GM12878 (cell line): ENCODE measurements at regions of chr20 and their contacts with region 1.

Region 1: GRCh38 chr20:36154700-36155628 is at the start of gene EPB41L1:
- DNase-seq: no peak
- ATAC-seq: no peak
- H3K4me3 ChIP-seq: no peak within 1 kb of the TSS
- H3K27ac ChIP-seq: no peak within 1 kb of the TSS
- H3K4me1 ChIP-seq: no peaks in the 10 kb centered on the region
- H3K27me3 ChIP-seq: peaks cover 7 to 10% of the 10 kb centered on the region in 2 experiments; a peak in 3 of 4 replicates
- CTCF ChIP-seq: no peak
- EP300 ChIP-seq: no peak
- POLR2A ChIP-seq: no peak
- RAD21 ChIP-seq: no peak
- polyA plus RNA-seq, gene EPB41L1: 0.08 to 0.16 TPM

Region 2: DNA sequence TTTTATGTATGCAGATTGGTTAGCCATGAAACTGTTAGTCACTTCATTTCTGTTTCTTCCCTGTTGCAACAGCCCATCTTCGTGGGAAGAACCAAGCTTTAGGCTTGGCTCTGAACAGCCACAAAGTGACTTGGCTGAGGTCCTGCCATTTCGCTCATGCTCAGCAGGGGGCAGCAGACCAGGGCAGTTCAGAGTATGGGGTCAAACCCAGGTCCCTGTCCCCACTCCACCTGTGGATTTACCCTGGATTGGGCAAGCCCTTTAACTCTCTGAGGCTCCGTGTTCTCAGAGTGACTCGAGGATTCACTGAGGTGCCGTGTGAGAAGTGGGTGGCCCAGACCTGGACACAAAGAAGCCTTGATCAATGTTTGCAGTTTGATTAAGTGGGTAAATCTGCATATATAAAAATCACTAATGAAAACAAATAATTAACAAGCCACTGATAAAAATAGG is 1616.3 kb before region 1 on chr20:
- CTCF ChIA-PET with region 1: no interaction called
- POLR2A ChIA-PET with region 1: no interaction called
- RAD21 ChIA-PET with region 1: no interaction called
- SMC1A ChIA-PET with region 1: no interaction called
- in situ Hi-C with region 1: no loop called
- intact Hi-C with region 1: no loop called
- DNase-seq: no peak
- ATAC-seq: peak; percentile 85
- H3K4me3 ChIP-seq: no peak overlapping the region
- H3K27ac ChIP-seq: no peak overlapping the region
- H3K4me1 ChIP-seq: peaks cover 4% of the 10 kb centered on the region; the same call in 1 of the 2 replicates
- H3K27me3 ChIP-seq: no peaks in the 10 kb centered on the region
- CTCF ChIP-seq: peak; percentile 78 to 92 (median 88)
- EP300 ChIP-seq: no peak
- POLR2A ChIP-seq: no peak
- RAD21 ChIP-seq: peak; percentile 69

Region 3: GRCh38 chr20:36085686-36086267 is 69.2 kb before region 1 on chr20:
- CTCF ChIA-PET with region 1: no interaction called
- POLR2A ChIA-PET with region 1: no interaction called
- RAD21 ChIA-PET with region 1: no interaction called
- SMC1A ChIA-PET with region 1: no interaction called
- in situ Hi-C with region 1: no loop called
- intact Hi-C with region 1: no loop called
- DNase-seq: no peak
- ATAC-seq: peak; percentile 75
- H3K4me3 ChIP-seq: no peak overlapping the region
- H3K27ac ChIP-seq: no peak overlapping the region
- H3K4me1 ChIP-seq: no peaks in the 10 kb centered on the region; the same call in 1 of the 2 replicates
- H3K27me3 ChIP-seq: no peaks in the 10 kb centered on the region
- CTCF ChIP-seq: no peak
- EP300 ChIP-seq: no peak
- POLR2A ChIP-seq: no peak
- RAD21 ChIP-seq: no peak

Region 4: DNA sequence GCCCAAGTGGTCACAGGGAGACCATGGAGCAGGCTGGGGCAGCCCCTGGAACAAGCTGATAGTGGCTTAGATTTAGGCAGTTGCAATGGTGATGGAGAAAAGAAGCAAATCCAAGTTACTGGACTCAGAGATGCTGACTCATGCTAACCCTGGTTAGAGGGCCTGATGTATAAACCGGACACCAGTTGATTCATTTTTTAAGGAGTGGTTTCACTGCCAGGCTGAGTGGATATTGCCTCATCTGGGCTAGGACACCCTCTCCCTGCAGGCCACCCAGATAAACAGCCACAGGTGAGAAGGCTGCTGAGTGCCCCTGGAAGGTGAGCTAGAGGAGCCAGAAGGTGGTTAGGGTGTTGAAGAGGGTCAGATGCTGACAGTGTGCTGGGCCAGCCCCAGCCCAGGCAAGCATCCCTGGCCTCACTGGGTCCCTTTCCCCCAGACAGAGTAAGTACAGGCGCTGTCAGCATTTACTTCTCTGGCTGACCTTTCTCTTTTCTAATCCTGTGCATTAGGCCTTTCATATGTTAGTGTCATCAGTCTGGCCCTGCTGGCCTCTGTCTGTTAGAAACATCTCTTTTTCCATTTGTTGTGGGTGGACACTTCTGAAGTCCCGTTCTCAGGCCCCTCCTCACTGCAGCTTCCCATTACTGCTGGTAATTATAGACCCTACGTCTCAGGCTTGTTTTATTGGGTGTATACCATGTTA is 13.0 kb after region 1 on chr20:
- CTCF ChIA-PET with region 1: interaction called, 13 read pairs
- POLR2A ChIA-PET with region 1: no interaction called
- RAD21 ChIA-PET with region 1: no interaction called
- SMC1A ChIA-PET with region 1: interaction called, 4 read pairs
- in situ Hi-C with region 1: no loop called
- intact Hi-C with region 1: no loop called
- DNase-seq: no peak
- ATAC-seq: no peak
- H3K4me3 ChIP-seq: no peak overlapping the region
- H3K27ac ChIP-seq: no peak overlapping the region
- H3K4me1 ChIP-seq: no peaks in the 10 kb centered on the region
- H3K27me3 ChIP-seq: no peaks in the 10 kb centered on the region; a peak in 1 of 4 replicates
- CTCF ChIP-seq: no peak
- EP300 ChIP-seq: no peak
- POLR2A ChIP-seq: no peak
- RAD21 ChIP-seq: no peak

Region 5: GRCh38 chr20:36645998-36646397 is 491.0 kb after region 1 on chr20 and contains the start of gene SLA2:
- CTCF ChIA-PET with region 1: no interaction called
- POLR2A ChIA-PET with region 1: no interaction called
- RAD21 ChIA-PET with region 1: no interaction called
- SMC1A ChIA-PET with region 1: no interaction called
- in situ Hi-C with region 1: no loop called
- intact Hi-C with region 1: no loop called
- DNase-seq: no peak
- ATAC-seq: peak; percentile 89
- H3K4me3 ChIP-seq: no peak within 1 kb of the TSS
- H3K27ac ChIP-seq: 0 out of 2 replicates have a peak within 1 kb of the TSS, but pooled peaks have one; percentile 24
- H3K4me1 ChIP-seq: peaks cover 16% of the 10 kb centered on the region
- H3K27me3 ChIP-seq: no peaks in the 10 kb centered on the region
- CTCF ChIP-seq: no peak
- EP300 ChIP-seq: no peak
- POLR2A ChIP-seq: peak; percentile 58; the same call in 1 of the 2 replicates
- RAD21 ChIP-seq: no peak
- polyA plus RNA-seq, gene SLA2: 0.35 to 0.79 TPM